ENCODE measurements at regions of chr5 and their contacts with region 1.

Region 1: DNA sequence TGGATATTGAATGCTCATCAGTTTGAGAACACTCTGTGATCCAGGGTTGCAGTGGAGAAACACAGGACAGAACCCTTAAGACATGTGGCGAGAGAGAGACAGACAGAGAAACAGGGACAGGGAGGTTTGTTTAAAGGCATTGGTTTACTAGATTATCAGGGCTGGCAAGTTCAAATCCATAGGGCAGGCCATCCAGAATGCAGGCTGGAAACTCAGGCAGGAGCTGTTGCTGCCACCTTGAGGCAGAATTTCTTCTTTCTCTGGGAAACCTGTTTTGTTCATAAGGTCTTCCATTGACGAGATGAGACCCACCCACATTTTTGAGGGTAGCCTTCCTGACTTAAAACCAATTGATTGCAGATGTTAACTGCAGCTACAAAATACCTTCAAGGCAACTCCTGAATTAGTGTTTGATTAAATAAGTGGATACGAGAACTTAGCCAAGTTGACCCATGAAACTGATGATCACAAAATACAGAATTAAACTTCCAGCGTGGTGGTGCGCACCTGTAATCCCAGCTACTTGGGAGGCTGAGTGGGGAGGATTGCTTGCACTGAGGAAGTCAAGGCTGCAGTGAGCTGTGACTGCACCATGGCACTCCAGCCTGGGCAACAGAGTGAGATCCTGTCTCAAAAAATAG is 55.9 kb downstream of the NSUN2 start:
- DNase-seq: peak; percentile 44
- H3K4me3 Mint-ChIP-seq: no peak overlapping the region
- H3K27ac Mint-ChIP-seq: no peak overlapping the region
- H3K4me1 Mint-ChIP-seq: no peaks in the 10 kb centered on the region
- H3K27me3 Mint-ChIP-seq: peaks cover 20% of the 10 kb centered on the region

Region 2: GRCh38 chr5:5886812-5887486 is 690.0 kb before region 1 on chr5:
- CTCF ChIA-PET with region 1: no interaction called
- intact Hi-C with region 1: loop called (anchors 2 kb)
- DNase-seq: peak; percentile 49
- H3K4me3 Mint-ChIP-seq: no peak overlapping the region
- H3K27ac Mint-ChIP-seq: no peak overlapping the region
- H3K4me1 Mint-ChIP-seq: peaks cover 2% of the 10 kb centered on the region
- H3K27me3 Mint-ChIP-seq: peaks cover 28% of the 10 kb centered on the region